A549 (cell line): ENCODE measurements at regions of chr3 and their contacts with region 1.

Region 1: DNA sequence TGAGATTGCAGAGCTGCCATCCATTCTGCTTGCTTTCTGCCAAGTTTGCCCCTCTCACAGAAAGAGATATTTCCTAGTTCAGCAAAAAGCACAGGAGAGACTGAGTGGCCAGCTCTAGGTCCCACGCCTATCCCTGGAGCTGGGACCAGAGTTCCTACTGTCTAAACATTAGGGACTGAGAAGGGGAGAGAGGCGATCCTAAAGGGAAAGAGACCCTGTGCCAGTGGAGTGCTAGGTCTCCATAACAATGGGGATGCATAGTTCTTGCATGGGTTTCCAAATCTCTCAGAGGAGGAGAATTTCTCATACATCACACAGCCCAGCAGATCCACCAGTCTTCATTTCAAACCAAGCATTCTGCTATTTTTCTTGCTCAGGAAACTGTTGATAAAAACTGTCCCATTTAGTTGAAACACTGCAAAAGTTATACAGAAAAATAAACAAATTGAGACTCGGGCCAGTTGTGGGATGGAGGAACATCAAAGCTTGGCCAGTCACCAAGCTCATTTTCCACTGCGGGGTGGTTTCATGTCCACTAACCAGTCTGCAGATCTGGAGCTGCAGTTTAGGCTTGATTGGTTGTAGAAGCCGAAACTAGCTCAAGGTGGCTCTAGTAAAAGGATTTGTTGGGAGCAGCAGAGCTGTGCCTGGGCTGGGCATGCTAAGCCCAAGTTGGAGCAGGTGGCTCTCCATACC is 62.7 kb downstream of the EEFSEC start:
- DNase-seq: no peak
- ATAC-seq: no peak
- H3K4me3 ChIP-seq: no peak overlapping the region
- H3K27ac ChIP-seq: no peak overlapping the region; a peak in 1 of 6 replicates
- H3K4me1 ChIP-seq: peaks cover 13% of the 10 kb centered on the region; the same call in 2 of the 3 replicates
- CTCF ChIP-seq: no peak
- EP300 ChIP-seq: no peak
- POLR2A ChIP-seq: no peak
- RAD21 ChIP-seq: no peak

Region 2: GRCh38 chr3:127556565-127556964 is 659.4 kb before region 1 on chr3:
- CTCF ChIA-PET with region 1: no interaction called
- POLR2A ChIA-PET with region 1: no interaction called
- DNase-seq: no peak
- ATAC-seq: no peak
- H3K4me3 ChIP-seq: no peak overlapping the region
- H3K27ac ChIP-seq: no peak overlapping the region
- H3K4me1 ChIP-seq: no peaks in the 10 kb centered on the region
- CTCF ChIP-seq: 0 out of 3 replicates have a peak, but pooled peaks have one; percentile 11
- EP300 ChIP-seq: no peak
- POLR2A ChIP-seq: no peak
- RAD21 ChIP-seq: no peak

Region 3: DNA sequence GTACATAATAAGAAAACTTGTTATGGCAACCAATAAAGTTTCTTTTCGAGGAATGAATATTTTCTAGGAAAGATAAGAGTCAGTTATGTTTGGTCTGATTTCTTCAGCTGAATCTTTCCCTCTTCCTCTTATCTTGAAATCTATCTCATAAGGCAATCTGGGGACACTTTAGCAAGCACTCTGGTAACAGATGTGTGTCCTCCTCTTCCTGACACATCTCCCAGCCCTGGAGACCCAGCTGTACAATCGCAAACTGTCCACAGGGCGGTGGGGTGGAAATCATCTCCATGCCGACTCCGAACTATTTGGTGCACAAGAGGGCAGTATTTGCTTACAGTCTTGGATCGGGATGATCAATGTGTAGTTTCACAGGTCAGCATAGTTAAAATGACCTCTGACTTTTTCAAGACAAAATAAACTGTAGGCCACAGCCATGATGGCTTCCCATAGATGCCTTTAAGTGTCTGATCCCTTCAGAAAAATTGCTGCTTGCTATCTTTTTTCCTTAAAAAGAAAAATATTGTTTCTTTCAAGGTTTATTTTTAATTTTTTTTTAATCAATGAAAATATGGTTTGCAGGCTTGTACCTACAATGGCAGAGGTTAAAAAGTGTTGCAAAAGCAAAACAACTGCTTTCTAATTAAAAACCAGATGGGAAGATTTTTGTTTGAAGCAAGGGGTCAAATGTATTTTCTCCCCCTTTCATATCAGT is 45.0 kb before region 1 on chr3:
- CTCF ChIA-PET with region 1: no interaction called
- POLR2A ChIA-PET with region 1: no interaction called
- DNase-seq: peak; percentile 67 to 78
- ATAC-seq: peak; percentile 97 to 99
- H3K4me3 ChIP-seq: no peak overlapping the region
- H3K27ac ChIP-seq: no peak overlapping the region
- H3K4me1 ChIP-seq: no peaks in the 10 kb centered on the region; the same call in 2 of the 3 replicates
- CTCF ChIP-seq: peak; percentile 83
- EP300 ChIP-seq: no peak
- POLR2A ChIP-seq: no peak
- RAD21 ChIP-seq: peak; percentile 80 to 83

Region 4: GRCh38 chr3:128226795-128227395 is 10.9 kb after region 1 on chr3:
- CTCF ChIA-PET with region 1: interaction called, 12 read pairs
- POLR2A ChIA-PET with region 1: no interaction called
- DNase-seq: peak; percentile 29 to 51
- ATAC-seq: peak; percentile 84 to 99
- H3K4me3 ChIP-seq: no peak overlapping the region
- H3K27ac ChIP-seq: no peak overlapping the region
- H3K4me1 ChIP-seq: no peaks in the 10 kb centered on the region
- CTCF ChIP-seq: peak; percentile 51
- EP300 ChIP-seq: no peak
- POLR2A ChIP-seq: no peak
- RAD21 ChIP-seq: peak; percentile 58 to 63

Region 5: GRCh38 chr3:128242818-128243601 is 27.1 kb after region 1 on chr3:
- CTCF ChIA-PET with region 1: no interaction called
- POLR2A ChIA-PET with region 1: no interaction called
- DNase-seq: no peak
- ATAC-seq: no peak
- H3K4me3 ChIP-seq: no peak overlapping the region
- H3K27ac ChIP-seq: no peak overlapping the region
- H3K4me1 ChIP-seq: no peaks in the 10 kb centered on the region
- CTCF ChIP-seq: no peak
- EP300 ChIP-seq: no peak
- POLR2A ChIP-seq: no peak
- RAD21 ChIP-seq: no peak